Prostate gland (tissue), 2 donors: ENCODE measurements at regions of chr11 and their contacts with region 1.

Region 1: DNA sequence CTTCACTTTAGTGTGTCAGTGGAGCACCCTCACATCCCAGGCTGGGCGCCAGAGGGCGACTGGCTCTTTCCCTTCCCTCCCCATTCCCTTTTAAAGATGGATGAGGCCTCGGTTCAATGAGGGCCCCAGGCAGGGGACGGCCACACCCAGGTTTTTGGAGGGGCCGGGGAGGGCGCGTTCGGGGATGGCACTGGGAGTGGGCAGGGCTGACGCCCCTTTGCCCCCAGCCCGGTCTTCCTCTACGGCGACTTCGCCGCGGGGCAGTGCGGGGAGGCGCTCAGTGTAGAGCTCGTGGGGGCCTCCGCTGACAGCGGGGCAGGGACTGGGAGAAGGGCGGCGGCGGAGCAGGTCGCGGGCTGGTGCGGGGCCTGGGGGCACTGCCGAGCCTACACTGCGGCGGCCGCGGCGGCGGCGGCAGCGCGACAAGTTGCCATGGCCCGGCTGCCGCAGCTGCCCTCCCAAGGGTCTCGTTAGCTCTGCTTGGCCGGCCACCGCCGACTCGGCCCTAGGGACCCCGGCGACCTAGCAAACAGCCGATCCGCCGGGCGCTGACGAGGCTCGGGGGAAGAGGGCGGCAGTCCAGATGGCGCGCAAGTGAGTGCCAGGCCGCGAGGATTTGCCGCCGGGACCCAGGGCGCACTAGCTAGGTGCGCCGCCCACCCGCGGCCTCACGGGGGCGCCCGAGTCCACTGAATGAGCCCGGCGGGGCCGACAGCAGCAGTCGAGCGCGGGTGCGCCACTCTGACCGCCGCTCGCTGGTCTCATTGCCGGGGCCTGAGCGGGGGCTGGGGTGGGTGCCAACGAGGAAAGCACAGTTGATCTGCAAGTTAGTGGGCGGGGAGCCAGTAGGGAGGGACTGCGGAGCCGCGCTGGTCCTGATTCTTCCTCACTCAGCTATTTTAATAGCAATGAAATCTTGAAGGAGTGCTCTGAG is 92.7 kb downstream of the RRM1 start:
- DNase-seq: peak; percentile 98
- H3K4me3 ChIP-seq: peak overlapping the region; percentile 49 to 51
- H3K27ac ChIP-seq: peak overlapping the region; percentile 76 to 78
- H3K4me1 ChIP-seq: peaks cover 3% of the 10 kb centered on the region
- H3K27me3 ChIP-seq: no peaks in the 10 kb centered on the region
- CTCF ChIP-seq: peak; percentile 91 to 98 (median 96)
- POLR2A ChIP-seq: no peak

Region 2: GRCh38 chr11:4493480-4493818 is 306.1 kb after region 1 on chr11:
- intact Hi-C with region 1: loop called (anchors 2 kb)
- DNase-seq: no peak
- H3K4me3 ChIP-seq: no peak overlapping the region
- H3K27ac ChIP-seq: no peak overlapping the region
- H3K4me1 ChIP-seq: no peaks in the 10 kb centered on the region
- H3K27me3 ChIP-seq: no peaks in the 10 kb centered on the region
- CTCF ChIP-seq: peak in 1 of 4 experiments; percentile 20
- POLR2A ChIP-seq: no peak

Region 3: DNA sequence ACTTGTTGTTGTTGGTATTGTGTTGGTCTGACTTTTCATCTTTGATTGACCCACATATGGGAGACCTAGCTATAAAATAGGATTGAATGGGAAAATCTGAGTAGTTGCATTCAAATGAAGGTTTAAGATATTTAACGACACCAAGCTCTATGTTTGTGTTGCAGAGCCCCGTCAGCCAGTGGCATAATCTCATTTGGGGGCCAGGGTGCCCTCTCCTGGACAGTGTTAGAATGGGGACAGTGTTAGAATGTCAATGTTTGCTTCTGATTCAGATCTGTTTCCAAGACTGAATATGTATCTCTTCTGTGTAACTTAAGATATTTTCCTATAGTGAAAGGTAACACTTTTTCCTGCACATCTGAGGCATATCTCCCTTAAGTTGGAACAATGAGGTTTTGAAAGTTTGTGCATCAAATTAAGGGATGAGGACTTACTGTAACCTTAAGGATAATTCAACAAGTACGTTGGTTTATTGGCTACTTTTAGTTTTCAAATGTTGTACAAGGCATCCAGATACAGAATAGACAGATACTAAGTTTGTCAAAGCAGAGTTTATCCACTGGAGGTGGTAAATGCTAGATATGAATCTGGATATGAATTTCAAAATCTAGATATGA is 352.4 kb after region 1 on chr11:
- intact Hi-C with region 1: loop called (anchors 2 kb)
- DNase-seq: peak; percentile 57
- H3K4me3 ChIP-seq: no peak overlapping the region
- H3K27ac ChIP-seq: peak overlapping the region in 1 of 2 donors; percentile 4
- H3K4me1 ChIP-seq: no peaks in the 10 kb centered on the region
- H3K27me3 ChIP-seq: no peaks in the 10 kb centered on the region
- CTCF ChIP-seq: peak; percentile 30 to 74 (median 62)
- POLR2A ChIP-seq: no peak

Region 4: GRCh38 chr11:4607781-4608666 is 420.7 kb after region 1 on chr11 and contains the start of gene TRIM68:
- intact Hi-C with region 1: loop called (anchors 10 kb)
- DNase-seq: peak; percentile 94
- H3K4me3 ChIP-seq: peak within 1 kb of the TSS; percentile 52 to 68
- H3K27ac ChIP-seq: peak within 1 kb of the TSS; percentile 83 to 84
- H3K4me1 ChIP-seq: no peaks in the 10 kb centered on the region
- H3K27me3 ChIP-seq: no peaks in the 10 kb centered on the region
- CTCF ChIP-seq: peak in 2 of 4 experiments; percentile 6 to 13
- POLR2A ChIP-seq: peak; percentile 78
- total RNA-seq, gene TRIM68: 29.1 to 36.3 TPM

Region 5: GRCh38 chr11:4826425-4826824 is 639.1 kb after region 1 on chr11:
- intact Hi-C with region 1: loop called (anchors 5 kb)
- DNase-seq: peak; percentile 70
- H3K4me3 ChIP-seq: no peak overlapping the region
- H3K27ac ChIP-seq: peak overlapping the region; percentile 38 to 56
- H3K4me1 ChIP-seq: no peaks in the 10 kb centered on the region
- H3K27me3 ChIP-seq: no peaks in the 10 kb centered on the region
- CTCF ChIP-seq: peak in 3 of 4 experiments; percentile 61 to 91 (median 74)
- POLR2A ChIP-seq: no peak

Region 6: GRCh38 chr11:5004424-5005274 is 817.3 kb after region 1 on chr11:
- intact Hi-C with region 1: loop called (anchors 5 kb)
- DNase-seq: peak; percentile 39
- H3K4me3 ChIP-seq: no peak overlapping the region
- H3K27ac ChIP-seq: no peak overlapping the region
- H3K4me1 ChIP-seq: no peaks in the 10 kb centered on the region
- H3K27me3 ChIP-seq: no peaks in the 10 kb centered on the region
- CTCF ChIP-seq: peak in 3 of 4 experiments; percentile 49 to 55 (median 53)
- POLR2A ChIP-seq: no peak